ENCODE measurements at regions of chr9 and their contacts with region 1.

Region 1: GRCh38 chr9:77987081-77987656 is 44.4 kb downstream of the GNAQ start:
- DNase-seq: no peak
- ATAC-seq: no peak
- H3K4me3 ChIP-seq: no peak overlapping the region
- H3K4me3 Mint-ChIP-seq: no peak overlapping the region
- H3K27ac ChIP-seq: no peak overlapping the region
- H3K27ac Mint-ChIP-seq: no peak overlapping the region
- H3K4me1 ChIP-seq: peaks cover 10% of the 10 kb centered on the region in 2 experiments
- H3K4me1 Mint-ChIP-seq: peaks cover 64 to 70% (median 69%) of the 10 kb centered on the region in 3 donors
- H3K27me3 ChIP-seq: no peaks in the 10 kb centered on the region
- H3K27me3 Mint-ChIP-seq: no peaks in the 10 kb centered on the region

Region 2: DNA sequence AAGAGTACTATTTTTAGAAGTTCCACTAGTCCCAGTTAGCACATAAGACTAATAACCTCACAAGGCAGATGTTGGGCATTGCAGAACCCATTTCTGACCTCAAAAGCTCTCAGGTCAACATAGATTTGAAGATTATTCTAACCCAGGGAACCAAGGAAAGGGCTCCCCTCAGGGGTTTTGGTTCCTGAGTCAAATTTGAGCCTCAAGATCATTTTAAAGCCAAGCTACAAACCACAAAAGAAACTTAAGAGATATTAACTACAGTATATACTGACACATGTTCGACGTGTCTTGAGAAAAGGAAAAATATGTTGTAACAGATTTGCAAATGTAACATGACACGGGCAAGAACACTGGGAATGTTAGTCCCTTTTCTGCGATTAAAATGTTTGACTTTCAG is 44.1 kb before region 1 on chr9:
- CTCF ChIA-PET with region 1: no interaction called
- POLR2A ChIA-PET with region 1: interaction called in 1 of 2 experiments, 10 read pairs
- DNase-seq: no peak
- ATAC-seq: no peak
- H3K4me3 ChIP-seq: no peak overlapping the region
- H3K4me3 Mint-ChIP-seq: no peak overlapping the region
- H3K27ac ChIP-seq: no peak overlapping the region
- H3K27ac Mint-ChIP-seq: no peak overlapping the region
- H3K4me1 ChIP-seq: peaks cover 10 to 27% of the 10 kb centered on the region in 2 experiments
- H3K4me1 Mint-ChIP-seq: peaks cover 64 to 85% (median 64%) of the 10 kb centered on the region in 3 donors
- H3K27me3 ChIP-seq: no peaks in the 10 kb centered on the region
- H3K27me3 Mint-ChIP-seq: no peaks in the 10 kb centered on the region

Region 3: GRCh38 chr9:78053627-78054026 is 66.5 kb after region 1 on chr9:
- CTCF ChIA-PET with region 1: no interaction called
- POLR2A ChIA-PET with region 1: no interaction called
- DNase-seq: no peak
- ATAC-seq: peak in 2 of 4 experiments; percentile 26 to 63
- H3K4me3 ChIP-seq: no peak overlapping the region
- H3K4me3 Mint-ChIP-seq: peak overlapping the region in 1 of 3 donors; percentile 63
- H3K27ac ChIP-seq: no peak overlapping the region
- H3K27ac Mint-ChIP-seq: peak overlapping the region; percentile 0 to 16
- H3K4me1 ChIP-seq: peaks cover 11 to 16% of the 10 kb centered on the region in 2 experiments
- H3K4me1 Mint-ChIP-seq: peaks cover 22 to 30% (median 27%) of the 10 kb centered on the region in 3 donors
- H3K27me3 ChIP-seq: no peaks in the 10 kb centered on the region
- H3K27me3 Mint-ChIP-seq: no peaks in the 10 kb centered on the region

Measured in T-cell (primary cell).